Activated T-helper 1 cell treated with anti-CD3 and anti-CD28 coated beads, Interleukin-12 subunit alpha, Interleukin-12 subunit beta, Interleukin-2, Interleukin-4 antibody, amounts not matched to agents 30 ng/mL and 10 ng/mL and 1 ng/mL, durations not matched to agents 14 hours and 24 hours and 36 hours (primary cell): ENCODE measurements at regions of chr6 and their contacts with region 1.

Region 1: DNA sequence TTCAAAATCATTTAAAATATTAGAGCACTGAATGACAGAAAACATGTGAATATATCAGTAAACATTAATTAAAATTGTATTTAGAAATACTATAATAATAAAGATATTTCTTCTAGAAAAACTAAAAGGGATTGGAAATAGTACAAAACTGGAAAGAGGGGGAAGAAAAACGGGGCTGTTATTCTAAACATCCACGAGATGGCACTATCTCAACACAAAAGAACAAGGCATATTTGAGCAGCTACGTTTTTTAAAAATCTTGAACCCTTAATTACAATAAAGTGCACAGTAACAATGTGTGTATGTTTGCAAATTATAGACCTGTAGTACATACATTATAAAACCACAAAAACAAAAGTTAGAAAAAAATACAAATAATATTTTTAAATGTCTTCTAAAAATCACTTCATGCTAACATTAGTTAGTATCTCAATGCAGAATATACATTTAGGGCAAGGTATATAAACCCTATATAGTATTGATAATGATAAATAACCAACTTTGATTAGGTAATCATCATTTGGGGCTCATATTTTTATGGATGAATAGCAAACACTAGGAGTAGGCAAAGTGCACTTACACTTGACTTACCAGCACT is 42.5 kb upstream of the PNISR start:
- DNase-seq: no peak
- H3K4me3 Mint-ChIP-seq: no peak overlapping the region
- H3K27ac Mint-ChIP-seq: no peak overlapping the region
- H3K4me1 Mint-ChIP-seq: no peaks in the 10 kb centered on the region
- H3K27me3 Mint-ChIP-seq: no peaks in the 10 kb centered on the region

Region 2: DNA sequence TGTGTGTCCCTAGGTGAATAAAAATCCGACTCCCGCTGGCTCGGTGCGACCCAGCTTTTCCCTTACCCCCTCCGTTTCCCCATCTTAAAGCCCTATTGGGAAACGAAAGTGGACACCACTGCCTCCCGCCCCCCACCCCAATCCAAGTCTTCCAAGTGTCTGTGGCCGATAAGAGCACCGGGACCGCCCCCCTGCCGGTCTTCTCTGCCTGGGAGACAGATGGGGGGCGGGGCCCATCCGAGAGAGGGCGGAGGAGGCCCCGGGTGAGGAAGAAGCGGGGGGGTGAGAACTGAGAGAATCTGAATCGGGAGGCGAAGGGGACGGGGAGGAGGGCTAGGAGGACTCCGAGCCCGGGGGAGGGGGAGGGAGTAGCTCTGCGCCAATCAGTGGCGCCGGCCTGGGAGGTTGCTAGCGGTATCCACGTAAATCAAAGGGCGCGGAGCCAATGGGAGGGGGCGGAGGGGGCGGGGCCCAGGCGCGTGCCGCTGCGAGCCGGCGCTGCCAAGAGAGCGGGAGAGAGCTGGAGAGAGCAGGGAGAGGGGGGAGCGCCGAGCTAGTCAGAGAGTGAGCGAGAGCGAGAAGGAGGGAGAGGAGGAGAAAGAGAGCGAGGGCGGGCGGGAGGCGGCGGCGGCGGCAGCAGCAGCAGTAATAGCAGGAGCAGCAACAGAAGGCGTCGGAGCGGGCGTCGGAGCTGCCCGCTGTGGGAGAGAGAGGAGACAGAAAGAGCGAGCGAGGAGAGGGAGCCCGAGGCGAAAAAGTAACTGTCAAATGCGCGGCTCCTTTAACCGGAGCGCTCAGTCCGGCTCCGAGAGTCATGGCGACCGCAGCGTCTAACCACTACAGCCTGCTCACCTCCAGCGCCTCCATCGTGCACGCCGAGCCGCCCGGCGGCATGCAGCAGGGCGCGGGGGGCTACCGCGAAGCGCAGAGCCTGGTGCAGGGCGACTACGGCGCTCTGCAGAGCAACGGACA is 633.3 kb before region 1 on chr6 and contains the start of gene POU3F2:
- intact Hi-C with region 1: loop called (anchors 5 kb)
- DNase-seq: peak; percentile 33
- H3K4me3 Mint-ChIP-seq: peak within 1 kb of the TSS; percentile 84
- H3K27ac Mint-ChIP-seq: peak within 1 kb of the TSS; percentile 87
- H3K4me1 Mint-ChIP-seq: peaks cover 17% of the 10 kb centered on the region
- H3K27me3 Mint-ChIP-seq: peaks cover 81% of the 10 kb centered on the region
- total RNA-seq, gene POU3F2: not detected in 2 replicates

Region 3: DNA sequence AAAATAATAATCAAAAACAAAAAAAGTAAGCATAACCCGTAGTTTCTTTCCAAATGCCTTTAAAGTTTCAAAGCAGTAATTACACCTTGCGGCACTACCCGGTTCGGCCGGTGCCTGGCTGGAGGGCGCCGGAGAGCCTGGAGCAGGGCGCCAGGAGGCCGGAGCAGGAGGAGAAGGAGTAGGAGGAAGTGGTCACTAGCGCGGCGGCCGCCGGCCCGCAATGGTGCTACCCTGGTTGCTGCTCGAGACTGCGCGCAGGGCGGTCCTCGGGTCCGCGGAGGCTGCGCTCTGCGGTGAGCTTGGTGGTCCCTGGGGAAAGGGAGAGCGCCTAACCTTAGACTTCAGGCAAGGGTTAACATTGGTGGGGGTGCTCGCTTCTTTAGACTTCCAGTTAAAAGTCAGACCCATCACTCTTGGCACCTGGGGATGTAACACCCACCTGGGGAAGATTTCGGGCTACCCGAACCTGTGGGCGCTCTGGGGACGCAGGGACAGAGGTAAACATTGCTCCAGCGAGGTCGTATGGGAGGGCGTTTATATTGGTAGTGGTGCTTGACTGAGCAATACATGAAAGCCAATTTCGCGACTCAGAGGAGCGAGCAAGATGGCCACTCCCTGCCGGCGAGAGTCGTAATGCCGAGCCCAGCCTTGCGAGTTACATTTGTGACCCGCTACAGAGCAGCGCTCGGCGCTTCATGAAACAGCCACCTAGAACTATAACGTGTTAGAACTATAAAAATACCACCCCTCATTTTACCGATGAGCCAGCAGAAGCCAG is 53.4 kb after region 1 on chr6:
- intact Hi-C with region 1: loop called (anchors 2 kb)
- DNase-seq: peak; percentile 68
- H3K4me3 Mint-ChIP-seq: peak overlapping the region; percentile 98
- H3K27ac Mint-ChIP-seq: peak overlapping the region; percentile 96
- H3K4me1 Mint-ChIP-seq: peaks cover 20% of the 10 kb centered on the region
- H3K27me3 Mint-ChIP-seq: peaks cover 11% of the 10 kb centered on the region

Region 4: DNA sequence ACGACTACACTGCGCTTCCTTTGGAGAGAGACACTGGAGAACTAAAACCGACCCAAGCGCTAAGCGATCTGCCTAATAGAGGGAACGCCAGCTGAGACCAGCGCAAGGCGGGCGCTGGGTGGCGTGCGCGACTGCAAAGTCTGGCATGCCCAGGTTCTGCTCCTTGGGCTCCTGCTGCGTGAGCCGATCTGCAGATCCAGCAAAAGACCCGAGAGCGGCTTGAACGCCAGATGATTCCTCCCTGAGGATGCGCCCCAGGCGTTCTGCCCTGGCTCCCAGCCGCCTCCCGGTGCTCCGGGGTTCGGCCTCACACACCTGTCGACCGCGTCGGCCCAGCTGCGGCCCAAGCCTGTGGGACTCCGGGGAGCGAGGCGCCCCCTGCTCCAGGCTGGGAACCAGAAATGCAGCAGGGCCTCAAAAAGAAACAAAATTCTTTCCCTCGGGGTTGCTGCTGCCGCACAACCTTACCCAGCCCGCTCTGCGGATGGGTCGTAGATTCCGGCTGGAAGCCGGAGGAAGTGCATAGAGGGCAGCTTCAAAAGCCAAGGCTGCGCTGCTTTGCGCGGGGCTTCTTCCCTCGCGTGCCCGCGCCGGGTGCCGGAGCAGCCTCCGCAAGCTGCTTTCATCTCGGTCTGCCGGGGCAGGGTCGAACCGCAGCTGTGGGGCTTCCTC is 121.1 kb after region 1 on chr6:
- intact Hi-C with region 1: loop called (anchors 2 kb)
- DNase-seq: peak; percentile 43
- H3K4me3 Mint-ChIP-seq: peak overlapping the region; percentile 86
- H3K27ac Mint-ChIP-seq: peak overlapping the region; percentile 29
- H3K4me1 Mint-ChIP-seq: peaks cover 34% of the 10 kb centered on the region
- H3K27me3 Mint-ChIP-seq: peaks cover 80% of the 10 kb centered on the region

Region 5: DNA sequence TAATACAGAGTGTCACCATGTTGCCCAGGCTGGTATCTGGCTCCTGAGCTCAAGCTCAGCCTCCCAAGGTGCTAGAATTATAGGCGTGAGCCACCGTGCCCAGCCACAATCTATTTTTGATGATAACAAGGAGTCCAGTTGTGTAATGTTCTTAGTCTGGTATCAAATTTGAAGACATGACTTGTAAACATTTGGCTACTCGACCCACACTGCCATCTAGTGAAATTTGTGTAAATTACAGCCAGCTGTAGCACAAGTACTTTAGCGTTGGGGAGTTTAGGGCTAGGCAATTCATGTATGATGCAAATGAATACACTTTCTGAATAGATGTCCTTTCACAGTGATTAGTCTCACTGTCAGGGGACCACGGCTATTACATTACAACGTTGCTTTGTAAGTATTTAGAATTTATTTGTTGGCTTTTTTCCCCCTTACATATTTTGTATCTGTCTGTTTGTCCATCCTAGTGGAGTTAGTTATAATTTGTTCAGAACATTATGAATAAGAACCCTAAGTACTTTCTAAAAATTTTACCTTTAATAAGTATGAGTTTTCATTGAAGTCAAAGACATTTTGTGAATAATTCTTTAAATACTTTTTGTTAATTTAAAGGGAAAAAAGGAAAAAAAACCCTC is 278.8 kb after region 1 on chr6:
- intact Hi-C with region 1: loop called (anchors 1 kb)
- DNase-seq: peak; percentile 45
- H3K4me3 Mint-ChIP-seq: no peak overlapping the region
- H3K27ac Mint-ChIP-seq: no peak overlapping the region
- H3K4me1 Mint-ChIP-seq: no peaks in the 10 kb centered on the region
- H3K27me3 Mint-ChIP-seq: peaks cover 26% of the 10 kb centered on the region

Region 6: DNA sequence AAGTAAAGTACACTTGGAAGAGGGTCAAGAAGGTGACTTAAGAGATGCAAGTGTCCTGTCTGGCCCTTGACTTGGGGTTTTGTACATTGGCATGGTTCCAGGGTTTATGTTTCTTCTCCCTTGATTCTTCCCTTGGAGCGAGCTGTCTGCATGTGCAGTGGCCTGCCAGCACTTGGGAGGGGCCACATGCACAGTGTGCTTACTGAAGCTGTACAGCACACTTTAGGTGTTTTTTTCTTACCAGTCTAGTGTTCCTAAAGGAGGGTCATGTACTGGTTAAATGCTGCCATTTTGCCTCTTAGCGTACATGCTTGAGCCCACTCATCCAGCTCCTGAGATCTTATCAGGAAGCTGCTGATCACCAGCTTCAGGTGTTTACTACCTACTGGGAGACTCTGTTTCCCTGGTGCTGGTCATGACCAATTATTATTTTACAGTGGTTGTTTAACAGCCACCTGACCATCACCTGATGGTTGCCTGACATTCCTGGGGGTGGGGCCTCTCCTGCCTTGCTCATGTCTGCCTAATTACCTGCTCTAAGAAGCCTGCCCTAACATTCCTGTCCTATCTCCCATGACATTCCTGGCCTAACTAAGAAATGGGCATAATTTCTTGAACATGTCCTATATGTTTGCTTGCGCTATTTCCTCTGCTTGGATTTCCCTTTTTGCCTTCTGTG is 343.5 kb after region 1 on chr6:
- intact Hi-C with region 1: loop called (anchors 10 kb)
- DNase-seq: no peak
- H3K4me3 Mint-ChIP-seq: no peak overlapping the region
- H3K27ac Mint-ChIP-seq: no peak overlapping the region
- H3K4me1 Mint-ChIP-seq: no peaks in the 10 kb centered on the region
- H3K27me3 Mint-ChIP-seq: peaks cover 6% of the 10 kb centered on the region

Region 7: GRCh38 chr6:100088009-100088408 is 620.4 kb after region 1 on chr6:
- intact Hi-C with region 1: no loop called
- DNase-seq: no peak
- H3K4me3 Mint-ChIP-seq: no peak overlapping the region
- H3K27ac Mint-ChIP-seq: no peak overlapping the region
- H3K4me1 Mint-ChIP-seq: no peaks in the 10 kb centered on the region
- H3K27me3 Mint-ChIP-seq: peaks cover 2% of the 10 kb centered on the region